ENCODE measurements at regions of chr11 and their contacts with region 1.

Region 1: DNA sequence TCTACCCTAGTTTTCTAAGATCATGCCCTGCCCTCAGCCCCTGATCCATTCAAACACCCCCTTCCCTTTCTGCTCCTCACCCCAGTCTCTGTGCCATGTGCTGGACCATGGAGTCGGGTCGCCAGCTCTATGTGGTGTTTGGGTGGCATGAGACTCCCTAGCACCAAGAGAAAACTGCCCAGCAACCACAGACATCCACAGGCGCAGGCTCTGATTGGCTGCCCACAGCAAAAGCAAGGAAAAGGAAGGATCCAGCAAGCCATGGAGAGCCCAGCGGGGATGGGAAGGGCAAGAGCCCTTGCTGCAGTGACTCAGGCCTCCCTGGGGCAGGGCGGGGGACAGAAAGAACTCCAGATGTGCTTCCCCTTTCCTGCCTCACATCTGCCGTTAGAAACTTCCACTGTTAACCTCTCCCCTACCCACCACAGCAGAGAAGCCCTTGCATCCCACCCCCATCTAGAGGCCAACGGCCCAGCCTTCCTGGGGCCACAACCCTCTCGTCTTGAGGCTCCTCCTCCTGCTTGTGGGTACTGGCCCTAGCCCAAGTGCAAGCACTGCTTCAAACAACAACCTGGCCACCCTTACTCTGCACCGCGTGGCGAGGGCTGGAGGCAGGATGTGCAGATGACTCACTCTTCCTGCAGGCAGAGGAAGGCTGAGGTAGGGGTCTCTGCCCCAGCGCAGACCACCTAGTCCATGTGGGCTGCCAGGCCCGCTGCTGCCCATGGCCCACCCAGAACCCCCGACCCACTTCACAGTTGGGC is 9.7 kb upstream of the AHNAK start:
- DNase-seq: peak; percentile 65 to 91 (median 80)
- ATAC-seq: peak; percentile 53 to 79 (median 76)
- H3K4me3 ChIP-seq: peak overlapping the region in 1 of 2 donors; percentile 37
- H3K4me3 Mint-ChIP-seq: peak overlapping the region; percentile 71 to 82 (median 77)
- H3K27ac ChIP-seq: peak overlapping the region; percentile 98
- H3K27ac Mint-ChIP-seq: peak overlapping the region; percentile 97 to 99
- H3K4me1 ChIP-seq: peaks cover 51 to 97% of the 10 kb centered on the region in 2 experiments
- H3K4me1 Mint-ChIP-seq: peaks cover 90 to 96% (median 91%) of the 10 kb centered on the region in 3 donors
- H3K27me3 ChIP-seq: no peaks in the 10 kb centered on the region
- H3K27me3 Mint-ChIP-seq: no peaks in the 10 kb centered on the region

Region 2: DNA sequence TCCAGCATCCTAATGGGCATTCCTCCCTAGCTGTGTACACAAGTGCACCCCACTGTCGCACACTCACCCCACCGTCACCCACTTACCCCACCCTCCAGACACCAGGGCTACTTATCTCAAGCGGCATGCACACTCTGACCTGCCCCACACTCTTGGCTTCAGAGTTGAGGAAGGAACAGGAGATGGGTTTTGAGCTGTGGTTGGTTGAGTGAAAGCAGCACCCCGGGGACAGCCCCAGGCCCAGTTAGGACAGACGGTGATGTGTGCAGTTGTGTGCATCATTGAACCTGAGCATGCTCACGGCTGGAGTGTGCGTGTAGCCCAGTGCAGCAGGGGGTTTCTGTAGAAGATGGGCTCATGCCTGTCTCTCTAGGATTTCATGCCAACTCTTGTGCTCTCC is 42.1 kb before region 1 on chr11:
- CTCF ChIA-PET with region 1: no interaction called
- POLR2A ChIA-PET with region 1: no interaction called
- DNase-seq: no peak
- ATAC-seq: peak in 1 of 4 experiments; percentile 15
- H3K4me3 ChIP-seq: no peak overlapping the region
- H3K4me3 Mint-ChIP-seq: no peak overlapping the region
- H3K27ac ChIP-seq: no peak overlapping the region
- H3K27ac Mint-ChIP-seq: no peak overlapping the region
- H3K4me1 ChIP-seq: peaks cover 0 to 8% of the 10 kb centered on the region in 2 experiments
- H3K4me1 Mint-ChIP-seq: peaks cover 5 to 14% (median 9%) of the 10 kb centered on the region in 3 donors
- H3K27me3 ChIP-seq: no peaks in the 10 kb centered on the region
- H3K27me3 Mint-ChIP-seq: no peaks in the 10 kb centered on the region

Region 3: DNA sequence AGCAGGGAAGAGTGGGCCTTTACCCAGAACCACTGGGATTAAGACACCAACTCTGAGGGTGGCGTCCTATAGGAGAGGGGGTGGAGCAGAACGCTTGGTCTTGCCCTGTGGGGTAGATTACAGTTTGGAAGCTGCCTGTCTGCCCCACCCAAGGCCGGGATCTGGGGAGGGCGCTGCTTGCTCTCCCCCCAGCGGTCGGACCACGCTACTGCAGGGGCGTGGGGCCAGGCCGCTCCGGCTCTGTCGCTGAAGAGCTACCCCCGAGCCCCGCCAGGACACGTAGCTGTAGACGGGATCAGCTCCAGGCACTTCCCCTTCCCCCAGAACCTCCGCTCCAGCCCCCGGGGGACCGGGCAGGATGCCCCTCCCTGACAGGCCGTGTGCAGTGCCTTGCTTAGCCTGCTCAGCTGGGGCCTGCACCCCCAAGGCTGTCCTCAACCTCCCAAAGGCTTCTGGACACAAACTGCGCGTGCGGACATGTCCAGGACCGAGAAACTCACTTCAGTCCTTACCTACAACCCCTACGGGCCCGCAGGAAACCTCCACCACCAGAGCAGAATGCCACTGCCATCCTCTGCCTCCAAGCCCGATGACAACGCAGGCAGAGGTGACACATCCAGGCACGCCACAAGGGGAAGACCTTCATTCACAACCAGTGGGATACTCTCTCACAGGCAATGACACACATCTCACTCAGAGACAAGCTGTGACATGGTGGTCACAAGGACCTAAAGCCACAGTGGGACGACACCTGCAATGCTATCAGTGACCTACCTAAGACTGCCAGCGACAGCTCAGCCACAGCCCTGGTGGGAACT is 13.3 kb before region 1 on chr11:
- CTCF ChIA-PET with region 1: interaction called, 7 to 63 read pairs
- POLR2A ChIA-PET with region 1: interaction called, 17 to 98 read pairs
- DNase-seq: peak; percentile 39 to 81 (median 62)
- ATAC-seq: peak; percentile 36 to 59 (median 42)
- H3K4me3 ChIP-seq: peak overlapping the region in 1 of 2 donors; percentile 95
- H3K4me3 Mint-ChIP-seq: peak overlapping the region; percentile 91 to 96 (median 92)
- H3K27ac ChIP-seq: peak overlapping the region; percentile 95
- H3K27ac Mint-ChIP-seq: peak overlapping the region; percentile 84 to 85
- H3K4me1 ChIP-seq: peaks cover 14 to 92% of the 10 kb centered on the region in 2 experiments
- H3K4me1 Mint-ChIP-seq: peaks cover 65 to 77% (median 75%) of the 10 kb centered on the region in 3 donors
- H3K27me3 ChIP-seq: no peaks in the 10 kb centered on the region
- H3K27me3 Mint-ChIP-seq: no peaks in the 10 kb centered on the region

Region 4: DNA sequence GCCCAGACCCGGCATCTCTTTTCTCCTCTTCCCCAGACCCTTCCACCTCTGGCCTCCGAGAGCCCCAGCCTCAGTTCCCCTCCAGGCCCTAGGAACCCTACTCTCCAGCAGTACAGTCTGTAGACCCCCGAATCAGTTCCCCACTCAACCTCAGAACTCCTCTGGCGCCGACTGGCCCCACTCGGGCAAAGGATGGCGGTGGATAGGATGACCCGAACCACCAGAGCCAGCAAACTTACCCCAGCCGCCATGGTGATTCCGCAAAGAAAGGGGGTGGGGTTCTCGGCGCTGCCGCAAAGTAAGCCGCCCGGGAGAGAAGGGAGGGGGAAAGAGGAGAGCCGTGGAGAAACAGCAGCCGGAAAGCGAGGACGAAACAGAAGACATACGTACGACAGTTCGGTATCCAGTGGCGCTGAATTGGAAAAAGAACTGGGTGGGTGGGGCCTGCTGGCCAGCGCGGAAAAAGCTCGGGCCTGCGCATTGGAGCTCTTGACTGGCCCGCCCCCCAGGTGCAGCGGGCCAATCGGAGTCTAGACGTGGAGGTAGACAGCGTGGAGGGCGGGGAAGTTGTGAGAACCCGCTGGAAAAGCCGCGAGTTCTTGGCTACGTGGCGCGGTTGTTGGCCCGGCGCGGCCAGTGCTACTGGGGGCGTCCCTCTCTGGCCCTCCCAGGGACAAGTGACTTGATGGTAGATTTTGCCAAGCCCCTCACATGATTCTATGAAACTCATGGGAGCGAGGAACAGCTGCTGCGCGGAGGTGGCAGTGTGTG is 17.5 kb after region 1 on chr11 and contains the start of gene EEF1G:
- CTCF ChIA-PET with region 1: interaction called, 3 to 7 read pairs
- POLR2A ChIA-PET with region 1: interaction called, 4 to 13 read pairs
- DNase-seq: peak; percentile 91 to 100 (median 98)
- ATAC-seq: peak; percentile 93 to 96 (median 94)
- H3K4me3 ChIP-seq: peak within 1 kb of the TSS; percentile 88 to 92
- H3K4me3 Mint-ChIP-seq: peak within 1 kb of the TSS; percentile 95 to 97 (median 97)
- H3K27ac ChIP-seq: peak within 1 kb of the TSS; percentile 76
- H3K27ac Mint-ChIP-seq: peak within 1 kb of the TSS; percentile 91 to 97
- H3K4me1 ChIP-seq: peaks cover 11 to 43% of the 10 kb centered on the region in 2 experiments
- H3K4me1 Mint-ChIP-seq: peaks cover 55 to 56% (median 56%) of the 10 kb centered on the region in 3 donors
- H3K27me3 ChIP-seq: no peaks in the 10 kb centered on the region
- H3K27me3 Mint-ChIP-seq: no peaks in the 10 kb centered on the region
- total RNA-seq, gene EEF1G: 1,908 to 2,187 (median 2,119) TPM

Region 5: GRCh38 chr11:62656796-62657429 is 100.6 kb after region 1 on chr11:
- CTCF ChIA-PET with region 1: no interaction called
- POLR2A ChIA-PET with region 1: no interaction called
- DNase-seq: no peak
- ATAC-seq: no peak
- H3K4me3 ChIP-seq: no peak overlapping the region
- H3K4me3 Mint-ChIP-seq: no peak overlapping the region
- H3K27ac ChIP-seq: no peak overlapping the region
- H3K27ac Mint-ChIP-seq: no peak overlapping the region
- H3K4me1 ChIP-seq: peaks cover 2 to 22% of the 10 kb centered on the region in 2 experiments
- H3K4me1 Mint-ChIP-seq: peaks cover 10 to 17% (median 15%) of the 10 kb centered on the region in 3 donors
- H3K27me3 ChIP-seq: no peaks in the 10 kb centered on the region
- H3K27me3 Mint-ChIP-seq: no peaks in the 10 kb centered on the region